PC-9 (cell line): ENCODE measurements at regions of chr4 and their contacts with region 1.

Region 1: GRCh38 chr4:42282081-42282901 is 115.0 kb upstream of the SHISA3 start:
- DNase-seq: peak in 1 of 2 experiments; percentile 10
- H3K4me3 ChIP-seq: no peak overlapping the region
- H3K27ac ChIP-seq: no peak overlapping the region
- H3K4me1 ChIP-seq: no peaks in the 10 kb centered on the region
- H3K27me3 ChIP-seq: peaks cover 22% of the 10 kb centered on the region
- CTCF ChIP-seq: peak; percentile 71

Region 2: GRCh38 chr4:42265782-42266602 is 16.3 kb before region 1 on chr4:
- CTCF ChIA-PET with region 1: no interaction called
- POLR2A ChIA-PET with region 1: interaction called, 10 read pairs
- intact Hi-C with region 1: no loop called
- DNase-seq: no peak
- H3K4me3 ChIP-seq: no peak overlapping the region
- H3K27ac ChIP-seq: no peak overlapping the region
- H3K4me1 ChIP-seq: no peaks in the 10 kb centered on the region
- H3K27me3 ChIP-seq: peaks cover 39% of the 10 kb centered on the region
- CTCF ChIP-seq: no peak